Panc1 (cell line): ENCODE measurements at regions of chr15 and their contacts with region 1.

Region 1: DNA sequence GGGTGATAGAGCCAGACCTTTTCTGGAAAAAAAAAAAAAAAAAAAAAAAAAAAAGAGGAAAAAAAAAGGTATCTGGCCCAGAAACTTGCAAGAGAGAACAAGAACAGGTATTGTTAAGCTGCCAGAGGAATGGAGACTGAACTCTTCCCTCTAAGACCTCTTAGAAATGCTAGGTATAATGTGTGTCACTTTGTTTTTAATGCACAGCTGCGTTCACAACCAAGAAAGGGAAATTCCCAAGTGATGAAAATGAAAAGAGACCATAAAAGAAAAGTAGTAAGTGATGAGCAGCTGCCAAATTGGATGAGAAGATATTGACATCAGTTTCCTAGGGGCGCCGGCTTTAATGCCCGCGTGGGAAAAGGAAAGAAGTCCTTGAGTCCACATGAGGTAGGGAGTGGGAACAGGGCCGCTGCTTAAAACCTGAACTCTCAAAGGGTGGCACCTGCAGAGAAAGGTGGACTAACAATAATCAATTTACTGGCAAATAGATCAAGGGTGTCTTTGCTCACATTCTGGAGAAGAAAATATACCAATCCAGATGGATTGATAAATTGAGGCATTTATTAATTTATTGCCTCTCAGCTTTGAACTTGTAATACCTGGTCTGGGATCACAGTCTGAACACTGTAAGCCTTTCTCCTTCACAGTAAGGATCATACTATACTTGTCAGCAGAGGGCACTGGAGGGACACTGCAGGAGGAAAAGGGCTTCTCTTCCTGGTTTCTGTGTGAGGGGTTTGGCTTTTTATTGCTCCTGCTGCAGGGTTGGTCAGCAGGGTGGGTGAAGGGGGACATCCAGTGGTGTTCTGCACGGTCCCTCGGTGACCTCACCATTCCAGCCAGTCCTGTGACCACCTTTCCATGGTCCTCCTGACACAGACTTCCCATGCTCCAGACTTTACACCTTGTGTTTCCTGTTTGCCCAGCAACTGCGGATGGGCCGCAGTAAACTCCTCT is 131.6 kb downstream of the AQP9 start:
- DNase-seq: peak; percentile 25
- ATAC-seq: peak; percentile 88
- H3K4me3 ChIP-seq: no peak overlapping the region
- H3K27ac ChIP-seq: peak overlapping the region; percentile 23; the same call in 1 of the 2 replicates
- H3K4me1 ChIP-seq: no peaks in the 10 kb centered on the region
- H3K27me3 ChIP-seq: no peaks in the 10 kb centered on the region
- CTCF ChIP-seq: peak; percentile 78

Region 2: GRCh38 chr15:58095415-58095814 is 174.3 kb before region 1 on chr15:
- CTCF ChIA-PET with region 1: no interaction called
- POLR2A ChIA-PET with region 1: no interaction called
- in situ Hi-C with region 1: no loop called
- intact Hi-C with region 1: no loop called
- DNase-seq: no peak
- ATAC-seq: no peak
- H3K4me3 ChIP-seq: no peak overlapping the region
- H3K27ac ChIP-seq: no peak overlapping the region
- H3K4me1 ChIP-seq: no peaks in the 10 kb centered on the region
- H3K27me3 ChIP-seq: no peaks in the 10 kb centered on the region
- CTCF ChIP-seq: no peak

Region 3: GRCh38 chr15:58433597-58434333 is 164.0 kb after region 1 on chr15:
- CTCF ChIA-PET with region 1: no interaction called
- POLR2A ChIA-PET with region 1: no interaction called
- in situ Hi-C with region 1: no loop called
- intact Hi-C with region 1: no loop called
- DNase-seq: no peak
- ATAC-seq: no peak
- H3K4me3 ChIP-seq: no peak overlapping the region
- H3K27ac ChIP-seq: no peak overlapping the region
- H3K4me1 ChIP-seq: no peaks in the 10 kb centered on the region
- H3K27me3 ChIP-seq: no peaks in the 10 kb centered on the region
- CTCF ChIP-seq: no peak

Region 4: GRCh38 chr15:58724466-58724865 is 454.7 kb after region 1 on chr15:
- CTCF ChIA-PET with region 1: no interaction called
- POLR2A ChIA-PET with region 1: interaction called, 11 read pairs
- in situ Hi-C with region 1: no loop called
- intact Hi-C with region 1: no loop called
- DNase-seq: no peak
- ATAC-seq: no peak
- H3K4me3 ChIP-seq: no peak overlapping the region
- H3K27ac ChIP-seq: no peak overlapping the region
- H3K4me1 ChIP-seq: no peaks in the 10 kb centered on the region
- H3K27me3 ChIP-seq: no peaks in the 10 kb centered on the region
- CTCF ChIP-seq: no peak

Region 5: DNA sequence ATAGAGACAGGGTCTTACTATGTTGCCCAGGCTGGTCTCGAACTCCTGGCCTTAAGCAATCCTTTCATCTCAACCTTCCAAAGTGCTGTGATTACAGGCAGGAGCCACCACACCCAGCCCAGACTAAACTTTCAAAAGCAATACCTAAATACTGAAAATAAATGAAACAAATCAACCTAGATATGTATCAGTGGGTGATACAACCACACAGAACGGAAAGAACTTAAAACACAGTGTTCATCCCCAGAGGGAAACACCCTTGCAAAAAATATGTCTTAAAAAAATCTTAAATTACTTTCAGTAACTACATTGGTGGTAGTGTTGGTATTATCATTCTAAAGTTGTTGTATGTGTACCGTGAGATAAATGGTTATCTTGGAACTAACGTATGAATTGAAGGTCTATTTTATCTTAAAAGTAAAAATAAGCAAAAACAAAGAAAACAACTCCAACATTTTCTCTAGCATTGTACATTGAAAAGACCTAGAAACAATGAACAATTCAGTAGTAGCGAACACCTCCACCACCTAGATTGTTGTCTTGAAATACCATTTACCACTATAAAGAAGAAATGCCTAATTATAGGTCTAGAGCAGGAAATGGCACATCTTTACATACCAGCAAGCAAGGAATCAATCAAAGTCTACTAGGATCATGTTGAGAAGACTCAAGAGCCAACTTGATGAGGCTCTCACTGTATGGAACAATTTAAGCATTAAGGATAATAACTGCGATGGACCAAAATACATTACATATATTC is 639.0 kb after region 1 on chr15:
- CTCF ChIA-PET with region 1: no interaction called
- POLR2A ChIA-PET with region 1: no interaction called
- in situ Hi-C with region 1: no loop called
- intact Hi-C with region 1: no loop called
- DNase-seq: no peak
- ATAC-seq: no peak
- H3K4me3 ChIP-seq: no peak overlapping the region
- H3K27ac ChIP-seq: no peak overlapping the region
- H3K4me1 ChIP-seq: no peaks in the 10 kb centered on the region
- H3K27me3 ChIP-seq: no peaks in the 10 kb centered on the region
- CTCF ChIP-seq: no peak

Region 6: GRCh38 chr15:58923696-58924300 is 654.1 kb after region 1 on chr15:
- CTCF ChIA-PET with region 1: interaction called, 18 read pairs
- POLR2A ChIA-PET with region 1: no interaction called
- in situ Hi-C with region 1: no loop called
- intact Hi-C with region 1: no loop called
- DNase-seq: no peak
- ATAC-seq: no peak
- H3K4me3 ChIP-seq: no peak overlapping the region
- H3K27ac ChIP-seq: no peak overlapping the region
- H3K4me1 ChIP-seq: no peaks in the 10 kb centered on the region
- H3K27me3 ChIP-seq: no peaks in the 10 kb centered on the region
- CTCF ChIP-seq: no peak